ENCODE measurements at regions of chr2 and their contacts with region 1.

Region 1: DNA sequence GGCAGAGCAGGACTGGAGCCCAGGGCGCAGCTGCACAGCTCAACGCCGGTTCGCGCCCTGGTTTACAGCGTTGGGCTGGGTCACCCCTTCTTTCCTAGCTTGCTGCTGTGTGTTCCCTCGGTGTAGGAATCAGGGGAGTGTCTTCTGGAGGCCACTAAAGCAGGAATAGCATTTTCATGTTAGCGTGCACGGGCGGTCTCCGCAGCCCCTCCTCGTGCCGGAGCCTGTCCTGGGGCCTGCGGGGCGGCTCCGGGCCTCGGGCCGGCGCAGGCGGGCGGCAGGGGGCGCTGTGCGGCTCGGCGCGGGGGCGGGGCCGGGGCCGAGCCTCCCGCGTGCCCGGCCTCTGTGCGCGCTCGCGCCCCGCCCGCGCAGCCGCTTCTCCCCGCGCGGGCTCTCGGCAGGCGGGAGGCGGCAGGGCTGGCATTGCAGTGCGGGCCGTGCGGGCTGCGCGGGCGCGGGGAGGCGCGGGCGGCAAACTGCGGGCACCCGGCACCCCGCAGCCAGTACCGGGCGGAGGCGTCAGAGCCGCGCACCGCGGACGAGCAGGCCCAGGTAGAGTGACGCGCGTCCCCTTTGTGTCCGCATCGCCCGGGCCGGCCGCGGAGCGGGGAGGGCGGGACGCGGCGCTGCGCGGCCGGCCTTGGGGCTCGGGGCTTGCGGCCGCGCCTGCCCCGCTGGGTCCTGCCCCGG is at the start of gene RNF144A:
- DNase-seq: peak in 8 of 10 donors; percentile 55 to 87 (median 71)
- H3K4me3 ChIP-seq: peak within 1 kb of the TSS; percentile 59 to 93 (median 82)
- H3K27ac ChIP-seq: peak within 1 kb of the TSS; percentile 72 to 97 (median 92)
- H3K27me3 ChIP-seq: no peaks in the 10 kb centered on the region
- CTCF ChIP-seq: peak in 54 of 56 donors; percentile 22 to 72 (median 53)
- total RNA-seq, gene RNF144A: 49.5 to 144 (median 83.6) TPM

Region 2: DNA sequence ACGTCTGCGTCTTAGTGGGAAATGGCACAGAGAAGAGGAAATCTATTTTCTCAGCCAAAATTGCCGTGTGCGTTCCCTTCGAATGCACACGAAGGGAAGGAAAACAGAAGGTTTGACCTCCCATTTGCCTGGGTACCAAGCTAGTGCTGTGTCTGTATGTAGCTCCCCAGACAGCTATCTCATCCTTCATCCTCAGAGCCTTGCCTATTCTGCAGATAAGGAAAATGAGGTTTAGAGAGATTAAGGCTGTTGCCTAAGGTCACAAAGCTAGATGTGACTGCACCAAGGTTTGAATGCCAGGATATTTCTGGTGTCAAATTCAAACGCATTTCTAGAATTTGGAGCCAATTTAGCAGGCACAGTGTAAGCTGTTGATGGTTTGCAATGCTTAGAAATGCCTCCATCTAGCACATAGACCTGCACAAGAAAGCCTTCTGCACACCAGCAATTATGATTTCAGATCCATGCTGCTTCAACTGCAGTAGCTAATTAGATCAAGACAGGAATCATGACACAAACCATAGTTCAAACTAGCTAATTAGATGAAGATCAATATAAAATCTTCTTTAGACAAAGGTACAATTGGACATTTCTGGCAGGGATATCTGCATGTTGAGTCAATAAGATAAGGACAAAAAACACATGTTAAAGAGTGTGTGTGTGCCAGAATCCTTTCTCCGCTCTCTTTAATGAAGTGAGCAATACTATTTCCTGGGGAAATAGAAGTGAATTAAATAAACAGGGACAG is 166.6 kb before region 1 on chr2:
- intact Hi-C with region 1: no loop called
- DNase-seq: no peak
- H3K4me3 ChIP-seq: no peak overlapping the region
- H3K27ac ChIP-seq: no peak overlapping the region
- H3K27me3 ChIP-seq: peaks cover 0 to 30% (median 0%) of the 10 kb centered on the region in 45 donors
- CTCF ChIP-seq: no peak

Region 3: GRCh38 chr2:6968319-6969100 is 51.3 kb after region 1 on chr2:
- intact Hi-C with region 1: loop called in 1 of 2 experiments (anchors 5 kb)
- DNase-seq: peak in 7 of 10 donors; percentile 41 to 72 (median 63)
- H3K4me3 ChIP-seq: no peak overlapping the region
- H3K27ac ChIP-seq: peak overlapping the region in 55 of 59 donors; percentile 5 to 84 (median 73)
- H3K27me3 ChIP-seq: no peaks in the 10 kb centered on the region
- CTCF ChIP-seq: peak in 51 of 56 donors; percentile 14 to 73 (median 52)

Region 4: GRCh38 chr2:7037340-7038333 is 120.4 kb after region 1 on chr2:
- intact Hi-C with region 1: loop called (anchors 5 kb)
- DNase-seq: peak; percentile 70 to 85 (median 79)
- H3K4me3 ChIP-seq: no peak overlapping the region
- H3K27ac ChIP-seq: peak overlapping the region in 37 of 59 donors; percentile 1 to 93 (median 39)
- H3K27me3 ChIP-seq: no peaks in the 10 kb centered on the region
- CTCF ChIP-seq: peak; percentile 52 to 93 (median 82)

Measured in dorsolateral prefrontal cortex (tissue), 120 donors.